ENCODE measurements at regions of chr6 and their contacts with region 1.

Region 1: DNA sequence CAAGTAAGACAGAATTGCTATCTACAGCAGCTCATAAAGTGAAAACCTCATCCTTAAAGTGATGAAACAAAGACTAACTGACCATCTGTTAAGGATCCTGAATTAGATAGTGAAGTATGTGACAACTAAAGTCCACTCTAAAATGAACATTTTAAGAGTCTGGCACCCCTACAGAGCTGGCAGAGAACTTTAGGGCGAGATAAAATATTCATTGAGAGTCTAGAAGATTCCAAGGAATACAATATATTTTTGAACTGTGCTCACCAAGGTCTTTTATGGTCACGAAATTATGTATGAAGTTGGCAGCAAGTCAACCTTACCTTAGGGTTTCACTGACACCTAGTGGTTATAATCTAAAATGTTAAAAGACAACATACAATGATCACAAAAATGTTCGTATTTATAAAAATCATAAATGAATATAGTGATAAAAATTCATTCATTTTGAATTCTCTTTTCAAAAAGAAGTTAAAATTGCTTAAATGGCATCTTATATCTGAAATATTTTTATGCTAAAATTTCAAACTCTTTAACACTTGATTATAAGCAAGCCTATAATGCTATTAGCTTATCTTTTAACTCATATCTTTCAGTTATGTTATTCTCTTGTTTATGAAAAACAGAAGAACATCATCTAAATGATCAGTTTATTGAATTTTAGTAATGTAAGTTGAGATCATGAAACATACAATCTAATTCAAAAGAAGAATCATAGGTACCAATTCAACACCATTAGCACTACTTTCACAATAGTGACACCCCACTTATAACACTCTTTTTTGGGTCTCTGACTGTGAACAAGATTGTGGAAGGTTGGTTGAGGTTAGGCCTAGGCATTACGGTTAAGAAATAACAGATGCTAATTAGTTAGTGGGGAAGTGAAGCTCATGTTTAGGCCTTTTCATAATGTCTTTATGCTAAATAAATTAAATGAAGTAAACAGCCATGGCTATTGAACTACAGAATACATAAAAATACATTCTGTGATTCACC is 27.5 kb downstream of the RSPH3 start:
- DNase-seq: peak in 1 of 2 donors; percentile 82
- H3K4me3 ChIP-seq: no peak overlapping the region
- H3K27ac ChIP-seq: no peak overlapping the region
- H3K4me1 ChIP-seq: peaks cover 0 to 11% (median 0%) of the 10 kb centered on the region in 4 donors
- H3K27me3 ChIP-seq: no peaks in the 10 kb centered on the region
- CTCF ChIP-seq: peak in 5 of 7 experiments; percentile 10 to 60 (median 52)
- EP300 ChIP-seq: no peak
- POLR2A ChIP-seq: no peak

Region 2: DNA sequence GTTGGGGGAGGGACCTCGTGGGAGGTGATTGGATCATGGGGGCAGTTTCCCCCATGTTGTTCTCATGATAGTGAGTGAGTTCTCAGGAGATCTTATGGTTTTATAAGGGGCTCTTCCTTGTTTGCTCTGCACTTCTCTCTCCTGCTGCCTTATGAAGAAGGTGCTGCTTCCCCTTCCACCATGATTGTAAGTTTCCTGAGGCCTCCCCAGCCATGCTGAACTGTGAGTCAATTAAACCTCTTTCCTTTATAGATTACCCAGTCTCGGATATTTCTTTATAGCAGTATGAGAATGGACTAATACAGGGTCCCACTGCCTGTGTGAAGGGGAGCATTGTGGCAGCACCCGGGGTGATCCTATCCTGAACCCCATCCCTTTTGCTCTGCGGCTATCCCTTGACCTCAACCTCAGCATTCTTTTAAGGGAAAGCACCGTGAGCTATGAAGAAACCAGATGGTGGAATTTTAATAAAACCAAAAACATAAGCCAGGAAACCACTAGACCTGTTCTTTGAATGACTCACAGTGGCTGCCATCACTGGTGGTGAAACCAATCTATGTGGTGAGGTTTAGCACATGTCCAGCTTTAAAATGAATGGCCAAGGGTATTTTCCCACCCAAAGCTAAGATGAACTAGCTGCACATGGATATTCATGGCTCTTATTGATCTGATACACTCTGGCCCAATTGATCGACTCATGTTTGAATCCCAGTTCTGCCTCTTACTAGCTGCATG is 1529.3 kb before region 1 on chr6:
- intact Hi-C with region 1: no loop called
- DNase-seq: no peak
- H3K4me3 ChIP-seq: no peak overlapping the region
- H3K27ac ChIP-seq: no peak overlapping the region
- H3K4me1 ChIP-seq: peaks cover 0 to 5% (median 0%) of the 10 kb centered on the region in 4 donors
- H3K27me3 ChIP-seq: no peaks in the 10 kb centered on the region
- CTCF ChIP-seq: no peak
- EP300 ChIP-seq: no peak
- POLR2A ChIP-seq: no peak

Region 3: DNA sequence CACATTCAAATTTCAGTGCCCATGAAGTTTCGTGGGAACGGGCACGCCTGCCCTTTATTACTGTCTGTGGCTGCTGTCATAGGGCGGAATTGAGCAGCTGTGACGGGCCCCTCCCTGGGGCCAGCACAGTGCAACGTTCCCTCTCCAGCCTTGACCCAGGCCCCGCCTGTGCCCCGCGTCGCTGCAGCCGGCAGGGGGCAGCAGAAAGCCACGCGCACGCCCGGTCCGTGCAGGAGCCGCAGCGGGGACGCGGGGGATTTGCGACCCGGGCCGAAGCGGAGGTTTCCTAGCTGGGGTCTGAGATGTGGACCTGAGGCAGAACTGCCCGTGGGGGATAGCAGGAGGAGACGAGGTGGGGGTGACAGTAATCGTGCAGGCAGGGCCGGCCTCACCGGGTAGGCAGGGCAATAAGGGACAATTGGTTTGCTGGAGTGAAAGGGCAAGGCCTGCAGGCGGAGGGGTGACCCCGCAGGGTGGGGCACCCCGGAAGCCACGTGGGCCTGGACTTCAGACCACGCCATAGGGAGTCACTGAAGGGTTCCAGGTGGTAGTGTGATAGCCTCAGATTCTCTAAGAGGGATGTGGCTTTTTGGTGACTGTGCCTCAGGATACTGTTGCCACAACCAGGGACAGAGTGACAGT is 268.2 kb before region 1 on chr6:
- intact Hi-C with region 1: loop called (anchors 5 kb)
- DNase-seq: peak; percentile 83 to 94
- H3K4me3 ChIP-seq: peak overlapping the region; percentile 35 to 50 (median 41)
- H3K27ac ChIP-seq: peak overlapping the region; percentile 38 to 83 (median 74)
- H3K4me1 ChIP-seq: peaks cover 32 to 55% (median 44%) of the 10 kb centered on the region in 4 donors
- H3K27me3 ChIP-seq: no peaks in the 10 kb centered on the region
- CTCF ChIP-seq: peak in 6 of 7 experiments; percentile 53 to 98 (median 98)
- EP300 ChIP-seq: no peak
- POLR2A ChIP-seq: no peak

Measured in stomach (tissue), 19 donors.